SK-N-SH (cell line): ENCODE measurements at regions of chr16 and their contacts with region 1.

Region 1: GRCh38 chr16:1705688-1706385 is at the start of gene MAPK8IP3:
- DNase-seq: peak; percentile 99
- H3K4me3 ChIP-seq: peak within 1 kb of the TSS; percentile 82 to 89
- H3K27ac ChIP-seq: peak within 1 kb of the TSS; percentile 89 to 91
- H3K4me1 ChIP-seq: peaks cover 13 to 22% of the 10 kb centered on the region in 2 experiments; a peak in 3 of 4 replicates
- H3K27me3 ChIP-seq: no peaks in the 10 kb centered on the region
- CTCF ChIP-seq: peak; percentile 73
- EP300 ChIP-seq: peak in 1 of 2 experiments; percentile 22; a peak in 1 of 4 replicates
- RAD21 ChIP-seq: no peak
- polyA plus RNA-seq, gene MAPK8IP3: 53.6 and 57.3 TPM in 2 replicates

Region 2: DNA sequence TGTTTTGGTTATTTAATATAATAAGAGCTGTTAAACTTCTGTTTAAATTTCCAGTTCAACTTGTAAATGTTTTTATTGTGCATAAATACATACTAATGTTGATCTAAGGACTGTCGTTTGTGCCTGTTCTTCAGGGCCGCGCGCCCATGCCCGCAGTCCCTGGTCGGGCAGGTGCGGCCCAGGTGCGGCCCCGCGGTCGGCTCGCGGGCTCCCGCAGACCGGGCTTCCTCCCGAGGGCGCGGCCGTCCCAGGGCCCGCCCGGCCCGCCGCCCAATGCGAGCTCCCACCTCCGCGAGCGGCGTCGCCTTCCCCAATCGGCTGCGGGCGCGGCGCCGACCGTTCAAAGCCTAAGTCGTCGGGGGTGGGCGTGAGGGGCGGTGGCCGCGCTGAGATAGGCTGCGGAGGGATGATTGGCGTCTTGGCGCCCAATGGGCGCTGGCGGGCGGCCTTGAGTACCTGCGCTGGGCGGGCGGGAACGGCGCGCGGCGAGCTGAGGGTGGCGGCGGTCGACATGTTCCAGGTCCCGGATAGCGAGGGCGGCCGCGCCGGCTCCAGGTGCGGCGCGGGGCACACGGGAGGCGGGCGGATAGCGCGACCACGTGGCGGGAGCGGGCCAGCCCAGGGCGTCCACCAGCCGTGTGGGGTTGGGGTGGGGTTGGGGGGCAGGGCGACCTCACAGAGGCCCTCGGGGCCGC is 27.9 kb before region 1 on chr16 and contains the start of gene JPT2:
- CTCF ChIA-PET with region 1: interaction called, 14 read pairs
- POLR2A ChIA-PET with region 1: interaction called, 10 read pairs
- DNase-seq: peak; percentile 100
- H3K4me3 ChIP-seq: peak within 1 kb of the TSS; percentile 70 to 81
- H3K27ac ChIP-seq: peak within 1 kb of the TSS; percentile 35 to 79; a peak in 3 of 4 replicates
- H3K4me1 ChIP-seq: peaks cover 6 to 7% of the 10 kb centered on the region in 2 experiments; a peak in 1 of 4 replicates
- H3K27me3 ChIP-seq: no peaks in the 10 kb centered on the region
- CTCF ChIP-seq: no peak
- EP300 ChIP-seq: no peak
- RAD21 ChIP-seq: no peak
- polyA plus RNA-seq, gene JPT2: 36.9 and 67.4 TPM in 2 replicates

Region 3: DNA sequence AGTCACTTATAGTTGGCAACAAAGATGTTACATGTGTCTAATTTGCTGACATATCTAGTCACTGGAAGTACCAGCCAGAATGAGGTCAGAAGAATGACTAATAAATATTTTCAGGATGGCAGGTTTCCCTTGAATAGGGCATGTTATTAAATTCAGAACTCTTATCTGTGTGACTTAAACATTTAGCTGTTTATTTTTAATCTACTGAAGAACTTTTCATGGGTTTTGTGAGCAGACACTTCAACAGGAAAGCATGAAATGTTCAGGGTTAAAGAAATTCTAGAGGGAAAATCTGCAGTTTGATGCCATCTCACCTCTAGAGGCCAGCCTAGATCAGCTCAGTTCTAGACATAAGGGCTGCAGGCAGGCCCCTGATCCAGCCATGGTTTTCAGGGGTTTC is 14.6 kb before region 1 on chr16:
- CTCF ChIA-PET with region 1: interaction called, 10 read pairs
- POLR2A ChIA-PET with region 1: interaction called, 3 read pairs
- DNase-seq: no peak
- H3K4me3 ChIP-seq: no peak overlapping the region
- H3K27ac ChIP-seq: peak overlapping the region in 1 of 2 experiments; percentile 66; a peak in 2 of 4 replicates
- H3K4me1 ChIP-seq: 0 out of 4 replicates have a peak, but pooled peaks cover 0 to 17% of the 10 kb centered on the region in 2 experiments
- H3K27me3 ChIP-seq: no peaks in the 10 kb centered on the region
- CTCF ChIP-seq: peak; percentile 45
- EP300 ChIP-seq: no peak
- RAD21 ChIP-seq: no peak

Region 4: GRCh38 chr16:1772736-1773584 is 67.1 kb after region 1 on chr16 and contains the starts of genes EME2 and MRPS34:
- CTCF ChIA-PET with region 1: interaction called, 13 read pairs
- POLR2A ChIA-PET with region 1: interaction called, 3 read pairs
- DNase-seq: peak; percentile 93
- H3K4me3 ChIP-seq: peak within 1 kb of the TSS; percentile 90 to 91
- H3K27ac ChIP-seq: peak within 1 kb of the TSS; percentile 78 to 92
- H3K4me1 ChIP-seq: peaks cover 0 to 32% of the 10 kb centered on the region in 2 experiments; a peak in 2 of 4 replicates
- H3K27me3 ChIP-seq: no peaks in the 10 kb centered on the region
- CTCF ChIP-seq: peak; percentile 74
- EP300 ChIP-seq: no peak
- RAD21 ChIP-seq: peak; percentile 29; the same call in 1 of the 2 replicates
- polyA plus RNA-seq, gene EME2: 10.1 and 15.8 TPM in 2 replicates
- polyA plus RNA-seq, gene MRPS34: 127 and 156 TPM in 2 replicates

Region 5: GRCh38 chr16:1850981-1851380 is 145.1 kb after region 1 on chr16:
- CTCF ChIA-PET with region 1: no interaction called
- POLR2A ChIA-PET with region 1: no interaction called
- DNase-seq: no peak
- H3K4me3 ChIP-seq: no peak overlapping the region
- H3K27ac ChIP-seq: no peak overlapping the region
- H3K4me1 ChIP-seq: peaks cover 0 to 3% of the 10 kb centered on the region in 2 experiments; a peak in 1 of 4 replicates
- H3K27me3 ChIP-seq: peaks cover 12% of the 10 kb centered on the region; the same call in 1 of the 2 replicates
- CTCF ChIP-seq: no peak
- EP300 ChIP-seq: no peak
- RAD21 ChIP-seq: no peak